ENCODE measurements at regions of chr4 and their contacts with region 1.

Region 1: DNA sequence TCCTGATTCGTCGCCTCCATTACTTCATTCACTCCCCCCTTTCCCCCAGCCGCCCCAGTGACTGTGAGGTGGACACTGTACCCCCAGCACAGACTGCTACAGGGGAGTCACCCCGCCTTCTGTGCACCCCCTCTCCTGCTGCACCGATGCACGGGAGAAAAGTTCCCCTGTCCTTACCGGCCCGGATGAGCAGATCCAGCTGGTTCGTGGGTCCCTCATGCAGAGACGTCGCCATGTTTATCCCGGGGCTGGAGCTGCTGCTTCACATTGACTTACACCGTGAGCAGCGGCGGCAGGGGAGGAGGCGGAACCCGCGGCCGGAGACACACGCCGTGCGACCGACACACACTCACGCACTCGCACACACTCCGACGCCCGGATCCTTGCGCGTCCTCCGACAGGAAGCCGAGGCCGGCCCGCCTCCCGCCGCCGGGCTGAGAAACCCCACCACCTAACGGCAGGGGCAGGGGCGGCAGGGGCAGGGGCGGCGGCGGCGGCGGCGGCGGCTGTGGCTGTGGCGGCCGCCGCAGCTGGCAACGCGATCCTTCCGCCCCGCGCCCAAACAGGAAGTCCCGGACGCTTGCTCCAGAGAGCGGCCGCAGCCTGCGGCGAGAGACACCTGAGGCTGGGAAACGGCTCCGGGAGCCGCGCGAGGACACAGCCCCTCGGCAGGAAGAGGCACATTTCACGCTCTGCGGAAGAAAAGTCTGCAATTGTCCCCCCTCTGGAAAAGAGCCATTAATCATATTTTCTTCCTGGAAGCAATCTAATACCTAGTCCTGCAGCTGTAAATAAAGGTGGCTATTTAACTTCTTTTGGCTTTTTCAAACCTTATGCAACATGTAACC is 68.6 kb downstream of the NOCT start:
- DNase-seq: peak; percentile 54 to 92 (median 80)
- ATAC-seq: peak; percentile 41
- H3K4me3 ChIP-seq: peak overlapping the region; percentile 80 to 98
- H3K4me3 Mint-ChIP-seq: peak overlapping the region; percentile 87
- H3K27ac ChIP-seq: peak overlapping the region; percentile 93 to 96
- H3K27ac Mint-ChIP-seq: peak overlapping the region; percentile 94
- H3K4me1 ChIP-seq: peaks cover 25% of the 10 kb centered on the region
- H3K4me1 Mint-ChIP-seq: peaks cover 38% of the 10 kb centered on the region
- H3K27me3 ChIP-seq: no peaks in the 10 kb centered on the region
- H3K27me3 Mint-ChIP-seq: no peaks in the 10 kb centered on the region
- CTCF ChIP-seq: peak; percentile 18

Region 2: DNA sequence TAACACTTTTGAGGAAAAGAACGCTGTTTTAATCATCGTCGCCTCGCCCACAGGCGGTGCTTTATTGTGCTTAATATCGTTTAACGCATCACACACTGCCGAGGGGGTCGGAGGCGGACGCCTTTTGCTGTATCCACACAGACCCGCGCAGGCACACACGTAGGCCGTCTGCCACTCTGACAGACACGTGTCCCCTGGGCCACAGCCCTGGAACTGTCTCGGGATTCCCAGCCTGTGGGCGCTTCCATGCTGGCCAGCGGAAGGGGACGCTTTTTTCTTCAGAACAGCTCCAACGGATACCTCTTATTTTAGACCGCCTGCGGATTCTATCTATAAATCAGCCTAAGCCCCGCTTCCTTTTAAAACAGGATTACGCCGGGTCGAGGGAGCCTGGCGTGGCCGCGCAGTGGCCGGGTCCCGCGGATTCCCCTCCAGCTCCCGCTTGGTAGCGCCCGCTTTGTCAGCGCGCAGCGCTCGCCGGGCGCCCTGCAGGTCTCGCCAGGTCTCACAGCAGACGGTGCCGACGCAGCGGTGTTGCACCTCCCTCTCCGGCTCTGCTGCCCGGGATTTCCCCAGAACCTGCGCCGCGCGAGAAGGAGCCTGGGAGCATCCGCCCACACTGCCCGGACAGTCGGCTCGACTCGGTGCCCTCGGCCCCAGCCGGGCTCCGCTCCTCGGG is 68.8 kb before region 1 on chr4 and contains the start of gene NOCT:
- CTCF ChIA-PET with region 1: no interaction called
- POLR2A ChIA-PET with region 1: interaction called, 5 read pairs
- intact Hi-C with region 1: loop called (anchors 1 kb)
- DNase-seq: peak; percentile 76 to 98 (median 90)
- ATAC-seq: peak; percentile 86
- H3K4me3 ChIP-seq: peak within 1 kb of the TSS; percentile 52 to 67
- H3K4me3 Mint-ChIP-seq: peak within 1 kb of the TSS; percentile 91
- H3K27ac ChIP-seq: peak within 1 kb of the TSS; percentile 75 to 92
- H3K27ac Mint-ChIP-seq: peak within 1 kb of the TSS; percentile 99
- H3K4me1 ChIP-seq: peaks cover 7% of the 10 kb centered on the region
- H3K4me1 Mint-ChIP-seq: peaks cover 30% of the 10 kb centered on the region
- H3K27me3 ChIP-seq: no peaks in the 10 kb centered on the region
- H3K27me3 Mint-ChIP-seq: no peaks in the 10 kb centered on the region
- CTCF ChIP-seq: no peak
- total RNA-seq, gene NOCT: 45.7 to 49.6 TPM

Region 3: DNA sequence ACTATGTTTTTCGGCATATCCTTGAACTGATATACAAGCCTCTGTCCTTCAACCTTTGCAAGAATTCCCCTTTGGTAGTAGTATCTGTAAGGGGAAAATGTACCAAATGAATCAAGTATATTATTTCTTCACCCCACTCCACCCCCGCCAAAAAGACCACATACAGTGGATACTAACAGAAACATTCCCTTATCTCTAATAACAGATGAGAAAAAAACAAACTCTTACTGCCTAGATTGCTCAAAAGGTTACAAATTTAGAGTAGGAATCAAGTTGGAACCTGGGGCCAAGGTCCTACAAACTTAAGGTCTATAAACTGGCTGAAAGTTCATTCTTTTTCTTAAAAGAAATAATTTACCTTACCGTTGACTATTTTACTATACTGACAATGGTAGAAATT is 23.6 kb before region 1 on chr4:
- CTCF ChIA-PET with region 1: no interaction called
- POLR2A ChIA-PET with region 1: no interaction called
- intact Hi-C with region 1: loop called in 1 of 2 experiments (anchors 2 kb)
- DNase-seq: no peak
- ATAC-seq: no peak
- H3K4me3 ChIP-seq: no peak overlapping the region
- H3K4me3 Mint-ChIP-seq: no peak overlapping the region
- H3K27ac ChIP-seq: no peak overlapping the region
- H3K27ac Mint-ChIP-seq: peak overlapping the region; percentile 12
- H3K4me1 ChIP-seq: peaks cover 6% of the 10 kb centered on the region
- H3K4me1 Mint-ChIP-seq: peaks cover 26% of the 10 kb centered on the region
- H3K27me3 ChIP-seq: no peaks in the 10 kb centered on the region
- H3K27me3 Mint-ChIP-seq: no peaks in the 10 kb centered on the region
- CTCF ChIP-seq: no peak

Region 4: DNA sequence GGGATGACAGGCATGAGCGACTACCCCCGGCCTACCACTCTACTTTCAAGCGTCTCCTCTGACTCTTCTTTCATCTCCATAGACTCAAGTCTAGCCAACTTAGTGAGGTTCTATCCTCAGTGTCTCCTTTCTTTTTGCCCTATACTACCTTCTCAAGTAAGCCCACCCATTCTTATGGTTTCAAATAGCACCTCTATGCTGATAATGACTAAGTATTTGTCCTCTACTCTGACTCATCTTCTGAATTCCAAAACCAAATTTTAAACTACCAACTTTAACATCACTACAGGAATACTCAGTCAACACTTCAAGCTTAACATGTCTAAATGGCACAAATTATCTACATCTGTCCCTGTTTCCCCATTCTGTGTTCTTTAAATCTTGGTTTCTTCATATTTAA is 45.0 kb after region 1 on chr4:
- CTCF ChIA-PET with region 1: no interaction called
- POLR2A ChIA-PET with region 1: no interaction called
- intact Hi-C with region 1: no loop called
- DNase-seq: no peak
- ATAC-seq: no peak
- H3K4me3 ChIP-seq: no peak overlapping the region
- H3K4me3 Mint-ChIP-seq: no peak overlapping the region
- H3K27ac ChIP-seq: no peak overlapping the region
- H3K27ac Mint-ChIP-seq: no peak overlapping the region
- H3K4me1 ChIP-seq: no peaks in the 10 kb centered on the region
- H3K4me1 Mint-ChIP-seq: no peaks in the 10 kb centered on the region
- H3K27me3 ChIP-seq: no peaks in the 10 kb centered on the region
- H3K27me3 Mint-ChIP-seq: no peaks in the 10 kb centered on the region
- CTCF ChIP-seq: no peak

Region 5: DNA sequence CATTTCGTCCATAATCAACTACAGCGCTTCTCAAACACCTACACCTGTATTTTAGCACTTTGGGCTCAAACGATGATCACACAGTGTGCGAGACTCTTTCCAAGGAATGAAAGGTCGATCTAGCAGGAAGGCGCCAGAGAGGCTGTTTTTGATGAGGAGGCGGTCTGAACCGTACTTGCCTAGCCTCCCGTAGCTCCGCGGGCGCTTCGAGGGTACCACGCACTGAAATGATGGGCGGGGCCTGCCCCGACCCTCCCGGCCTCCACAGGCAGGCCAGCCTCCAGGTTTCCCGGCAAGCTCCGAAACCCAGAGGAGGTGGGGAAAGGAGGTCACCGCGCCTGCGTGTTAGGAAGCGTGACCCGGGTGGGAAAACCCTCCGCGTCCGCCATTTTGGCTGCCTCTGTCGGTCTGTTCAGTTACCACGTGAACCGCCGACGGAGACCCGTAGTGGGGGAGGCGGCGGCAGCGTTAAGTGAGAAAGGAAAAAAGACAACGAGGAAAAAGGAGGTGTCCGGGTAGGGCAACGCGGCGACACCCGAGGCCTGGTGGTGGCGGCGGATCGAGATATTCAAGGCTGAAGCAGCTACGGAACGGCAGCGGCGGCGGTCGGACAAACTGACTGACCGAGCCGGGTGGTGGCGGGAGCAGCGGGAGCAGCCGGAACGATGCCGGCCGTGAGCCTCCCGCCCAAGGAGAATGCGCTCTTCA is 217.1 kb after region 1 on chr4 and contains the start of gene NAA15:
- CTCF ChIA-PET with region 1: interaction called, 5 read pairs
- POLR2A ChIA-PET with region 1: interaction called, 34 read pairs
- intact Hi-C with region 1: loop called (anchors 1 kb)
- DNase-seq: peak; percentile 94 to 99 (median 97)
- ATAC-seq: peak; percentile 89
- H3K4me3 ChIP-seq: peak within 1 kb of the TSS; percentile 90 to 94
- H3K4me3 Mint-ChIP-seq: peak within 1 kb of the TSS; percentile 99
- H3K27ac ChIP-seq: peak within 1 kb of the TSS; percentile 75 to 96
- H3K27ac Mint-ChIP-seq: peak within 1 kb of the TSS; percentile 98
- H3K4me1 ChIP-seq: peaks cover 28% of the 10 kb centered on the region
- H3K4me1 Mint-ChIP-seq: peaks cover 60% of the 10 kb centered on the region
- H3K27me3 ChIP-seq: no peaks in the 10 kb centered on the region
- H3K27me3 Mint-ChIP-seq: no peaks in the 10 kb centered on the region
- CTCF ChIP-seq: no peak
- total RNA-seq, gene NAA15: 55.8 to 59.0 TPM

Region 6: DNA sequence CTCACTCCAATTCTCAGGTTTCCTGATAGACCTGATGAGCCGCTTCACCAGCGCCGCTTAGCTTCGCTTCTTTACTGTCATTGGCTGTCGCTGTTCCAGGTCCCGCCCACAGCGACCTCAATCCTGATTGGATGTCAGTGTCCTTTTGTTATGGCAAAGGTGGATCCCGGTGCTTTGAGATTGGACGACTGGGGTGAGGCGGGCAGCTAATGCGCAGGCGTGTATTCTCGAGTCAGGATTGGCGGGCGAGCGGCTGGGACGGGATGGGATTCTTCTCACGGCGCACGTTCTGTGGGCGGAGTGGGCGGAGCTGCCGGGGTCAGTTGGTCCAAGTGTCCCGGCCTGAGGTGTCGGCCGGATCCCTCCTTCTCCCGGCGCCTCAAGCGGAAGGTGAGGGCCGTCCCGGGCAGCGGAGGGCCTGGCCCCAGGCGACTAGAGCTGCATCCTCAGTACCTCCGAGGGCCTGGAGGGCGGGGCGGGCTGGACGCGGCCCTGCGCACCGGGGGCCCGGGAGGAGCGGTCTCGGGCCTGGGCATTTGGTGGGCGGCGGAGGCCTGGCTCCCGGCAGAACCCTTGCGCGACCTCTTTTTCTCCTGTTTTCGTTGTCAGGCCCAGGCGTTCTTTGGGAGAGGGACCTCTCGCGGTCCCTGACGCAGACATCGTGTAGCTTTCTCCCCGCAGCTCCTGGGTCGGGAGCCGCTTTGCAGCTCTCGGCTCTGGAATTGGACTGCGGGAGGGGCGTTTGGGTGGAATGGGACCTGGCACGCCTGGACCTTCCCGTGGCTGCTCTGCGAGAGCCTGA is 1289.3 kb after region 1 on chr4 and contains the start of gene SCOC:
- CTCF ChIA-PET with region 1: no interaction called
- POLR2A ChIA-PET with region 1: no interaction called
- intact Hi-C with region 1: loop called (anchors 2 to 10 kb)
- DNase-seq: peak; percentile 90 to 98 (median 95)
- ATAC-seq: peak; percentile 94
- H3K4me3 ChIP-seq: peak within 1 kb of the TSS; percentile 85 to 92
- H3K4me3 Mint-ChIP-seq: no peak within 1 kb of the TSS
- H3K27ac ChIP-seq: peak within 1 kb of the TSS; percentile 81 to 85
- H3K27ac Mint-ChIP-seq: peak within 1 kb of the TSS; percentile 76
- H3K4me1 ChIP-seq: peaks cover 20% of the 10 kb centered on the region
- H3K4me1 Mint-ChIP-seq: peaks cover 37% of the 10 kb centered on the region
- H3K27me3 ChIP-seq: no peaks in the 10 kb centered on the region
- H3K27me3 Mint-ChIP-seq: no peaks in the 10 kb centered on the region
- CTCF ChIP-seq: no peak
- total RNA-seq, gene SCOC: 7.1 to 8.3 TPM

Measured in CD8-positive, alpha-beta T cell (primary cell).